PC-3 (cell line): ENCODE measurements at regions of chr17 and their contacts with region 1.

Region 1: DNA sequence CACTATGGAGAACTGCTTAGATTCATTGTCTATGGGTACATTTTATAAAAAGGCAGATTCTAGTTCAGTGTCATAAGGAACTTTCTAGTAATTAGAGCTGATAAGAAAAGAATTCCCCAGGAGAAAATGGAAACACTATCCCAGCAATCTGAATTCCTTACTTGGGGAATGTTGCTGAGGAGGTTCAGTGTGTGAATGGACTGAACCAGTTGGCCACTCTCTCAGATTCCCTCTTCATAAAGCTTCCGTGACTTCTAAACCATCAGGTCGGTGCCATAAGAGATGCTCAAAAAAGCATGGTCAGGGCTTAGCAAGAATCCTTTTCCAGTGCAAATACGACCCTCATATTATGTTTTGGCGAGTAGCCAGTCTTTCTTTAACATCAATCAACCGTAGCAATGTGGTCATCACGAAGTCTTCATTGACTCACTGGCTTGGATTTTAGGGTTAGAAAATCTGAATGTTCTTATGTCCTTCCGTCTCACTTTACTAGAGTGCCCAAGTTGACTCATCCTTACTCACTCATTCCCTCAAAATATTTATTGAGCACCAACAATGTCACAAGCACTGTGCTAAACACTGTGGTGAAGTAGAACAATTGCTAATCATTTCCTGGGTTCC is 102.7 kb upstream of the HLF start:
- DNase-seq: peak; percentile 99
- ATAC-seq: peak; percentile 85
- H3K4me3 ChIP-seq: no peak overlapping the region
- H3K27ac ChIP-seq: peak overlapping the region; percentile 79
- H3K4me1 ChIP-seq: peaks cover 56% of the 10 kb centered on the region
- H3K27me3 ChIP-seq: no peaks in the 10 kb centered on the region
- CTCF ChIP-seq: no peak

Region 2: DNA sequence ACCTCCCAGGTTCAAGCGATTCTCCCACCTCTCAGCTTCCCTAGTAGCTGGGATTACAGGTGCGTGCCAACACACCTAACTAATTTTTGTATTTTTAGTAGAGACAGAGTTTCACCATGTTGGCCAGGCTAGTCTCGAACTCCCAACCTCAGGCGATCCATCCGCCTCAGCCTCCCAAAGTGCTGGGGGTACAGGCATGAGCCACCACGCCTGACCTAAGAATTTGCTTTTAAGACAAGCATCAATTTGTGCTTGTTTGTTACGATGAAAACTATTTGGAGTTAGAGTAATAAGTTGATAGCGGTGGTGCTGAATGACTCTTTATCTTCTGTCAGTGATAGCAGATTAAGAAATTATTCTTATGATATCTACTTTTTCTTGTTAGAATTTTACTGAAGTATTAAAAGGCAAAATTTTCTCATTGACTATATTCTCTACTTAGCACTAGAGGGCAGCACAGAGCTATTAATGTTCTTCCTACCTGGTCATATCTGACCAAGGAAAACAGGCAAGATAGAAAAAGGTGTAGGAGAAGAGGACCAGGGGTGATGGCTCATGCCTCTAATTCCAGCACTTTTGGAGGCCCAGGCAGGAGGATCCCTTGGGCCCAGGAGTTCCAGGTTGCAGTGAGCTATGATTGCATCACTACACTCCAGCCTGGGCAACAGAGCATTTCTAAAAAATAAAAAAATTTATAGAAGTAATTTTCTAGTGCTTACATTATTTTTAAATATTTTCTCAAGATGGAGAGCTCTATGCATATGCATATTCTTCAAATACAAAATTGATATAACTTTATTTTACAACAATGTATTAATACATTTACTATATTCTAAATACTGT is 169.0 kb before region 1 on chr17:
- CTCF ChIA-PET with region 1: no interaction called
- POLR2A ChIA-PET with region 1: no interaction called
- intact Hi-C with region 1: loop called (anchors 5 kb)
- DNase-seq: peak; percentile 82
- ATAC-seq: peak; percentile 88
- H3K4me3 ChIP-seq: no peak overlapping the region
- H3K27ac ChIP-seq: no peak overlapping the region
- H3K4me1 ChIP-seq: no peaks in the 10 kb centered on the region
- H3K27me3 ChIP-seq: no peaks in the 10 kb centered on the region
- CTCF ChIP-seq: peak; percentile 81

Region 3: DNA sequence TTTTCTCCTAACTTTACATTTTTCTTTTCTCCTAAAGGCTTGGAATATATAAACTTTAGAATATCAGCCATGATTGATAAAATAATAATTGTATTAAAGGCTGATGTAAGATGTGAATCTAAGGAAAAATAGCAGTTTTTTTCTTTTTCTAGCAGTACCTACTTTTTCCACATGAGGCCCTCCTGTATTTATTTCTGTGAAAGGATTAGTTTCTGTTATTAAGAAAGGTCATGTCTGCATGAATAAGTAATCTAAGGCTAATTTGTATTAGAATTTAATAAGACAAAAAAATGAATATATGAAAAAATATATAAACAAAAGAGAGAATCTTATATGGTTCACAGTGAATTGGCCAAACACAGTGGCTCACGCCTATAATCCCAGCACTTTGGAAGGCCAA is 108.2 kb before region 1 on chr17:
- CTCF ChIA-PET with region 1: no interaction called
- POLR2A ChIA-PET with region 1: interaction called, 3 read pairs
- intact Hi-C with region 1: loop called (anchors 1 kb)
- DNase-seq: peak; percentile 39
- ATAC-seq: no peak
- H3K4me3 ChIP-seq: no peak overlapping the region
- H3K27ac ChIP-seq: no peak overlapping the region
- H3K4me1 ChIP-seq: peaks cover 16% of the 10 kb centered on the region
- H3K27me3 ChIP-seq: no peaks in the 10 kb centered on the region
- CTCF ChIP-seq: peak; percentile 75

Region 4: GRCh38 chr17:55090079-55090492 is 72.0 kb before region 1 on chr17:
- CTCF ChIA-PET with region 1: no interaction called
- POLR2A ChIA-PET with region 1: interaction called, 3 read pairs
- intact Hi-C with region 1: loop called (anchors 2 kb)
- DNase-seq: peak; percentile 82
- ATAC-seq: peak; percentile 86
- H3K4me3 ChIP-seq: no peak overlapping the region
- H3K27ac ChIP-seq: peak overlapping the region; percentile 65
- H3K4me1 ChIP-seq: peaks cover 29% of the 10 kb centered on the region
- H3K27me3 ChIP-seq: no peaks in the 10 kb centered on the region
- CTCF ChIP-seq: no peak

Region 5: DNA sequence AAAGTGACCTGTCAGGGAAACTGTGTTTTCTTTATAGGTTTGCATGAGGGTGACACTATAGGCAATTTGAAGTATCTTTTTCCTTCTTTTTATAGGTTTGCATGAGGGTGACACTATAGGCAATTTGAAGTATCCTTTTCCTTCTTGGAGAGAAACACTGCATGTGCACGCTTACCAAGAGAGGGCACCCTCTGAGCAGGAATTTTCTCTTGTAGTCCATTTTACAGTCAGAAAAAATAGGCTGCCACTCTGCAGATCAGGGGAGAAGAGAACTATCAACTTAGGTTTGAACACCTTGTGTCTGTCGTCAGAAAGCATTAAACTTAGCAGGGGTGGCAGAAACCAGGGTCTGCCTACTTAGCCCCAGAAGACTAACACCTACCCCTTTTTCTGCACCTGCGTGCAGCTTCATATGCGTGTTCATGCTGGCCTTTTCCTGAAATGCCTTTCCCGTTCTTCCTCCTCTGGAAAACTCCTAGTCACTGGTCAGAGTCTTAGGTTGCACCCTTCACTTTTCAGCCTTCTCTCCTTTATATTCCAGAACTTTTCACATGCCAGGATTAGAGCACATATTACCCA is 365.6 kb after region 1 on chr17:
- CTCF ChIA-PET with region 1: no interaction called
- POLR2A ChIA-PET with region 1: no interaction called
- intact Hi-C with region 1: no loop called
- DNase-seq: peak; percentile 70
- ATAC-seq: peak; percentile 75
- H3K4me3 ChIP-seq: no peak overlapping the region
- H3K27ac ChIP-seq: no peak overlapping the region
- H3K4me1 ChIP-seq: no peaks in the 10 kb centered on the region
- H3K27me3 ChIP-seq: peaks cover 12% of the 10 kb centered on the region; the same call in 1 of the 2 replicates
- CTCF ChIP-seq: peak; percentile 88